ENCODE measurements at regions of chr6 and their contacts with region 1.

Region 1: DNA sequence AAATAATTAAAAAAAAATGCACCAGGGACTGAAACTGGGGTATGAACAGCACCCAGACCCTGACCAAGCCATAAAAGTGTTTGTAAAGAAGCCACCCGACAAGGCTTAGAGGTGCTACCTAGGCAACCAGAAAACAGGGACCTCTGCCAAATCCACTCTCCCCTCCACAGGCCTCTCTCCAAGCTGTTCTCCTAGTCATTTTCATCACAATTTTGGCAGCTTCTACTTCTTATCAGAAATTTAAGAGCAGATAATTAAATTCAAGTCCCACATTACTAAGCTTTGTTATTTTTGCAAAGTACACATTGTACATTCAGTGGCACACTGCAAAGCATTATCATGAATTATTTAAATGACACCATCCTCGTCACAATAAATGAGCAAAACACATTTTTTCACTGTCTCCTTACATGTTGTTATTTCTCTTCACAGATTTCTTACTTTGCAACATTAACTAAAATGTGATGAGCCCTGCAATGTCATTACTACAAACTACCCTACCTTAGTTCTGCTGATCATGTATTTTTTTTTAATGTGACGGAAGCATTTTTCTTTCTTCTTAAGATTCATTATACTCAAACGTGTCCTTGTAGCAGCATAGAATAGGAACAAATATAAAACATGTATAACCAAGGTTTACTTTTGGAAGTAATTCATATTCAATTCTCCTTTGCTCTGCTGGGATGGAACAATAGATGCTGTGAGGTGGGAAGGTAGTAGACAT is 38.1 kb downstream of the ECT2L start:
- DNase-seq: peak; percentile 59 to 82 (median 73)
- ATAC-seq: peak; percentile 94 to 97
- H3K4me3 ChIP-seq: no peak overlapping the region
- H3K27ac ChIP-seq: no peak overlapping the region
- H3K4me1 ChIP-seq: peaks cover 3% of the 10 kb centered on the region
- H3K27me3 ChIP-seq: no peaks in the 10 kb centered on the region

Region 2: DNA sequence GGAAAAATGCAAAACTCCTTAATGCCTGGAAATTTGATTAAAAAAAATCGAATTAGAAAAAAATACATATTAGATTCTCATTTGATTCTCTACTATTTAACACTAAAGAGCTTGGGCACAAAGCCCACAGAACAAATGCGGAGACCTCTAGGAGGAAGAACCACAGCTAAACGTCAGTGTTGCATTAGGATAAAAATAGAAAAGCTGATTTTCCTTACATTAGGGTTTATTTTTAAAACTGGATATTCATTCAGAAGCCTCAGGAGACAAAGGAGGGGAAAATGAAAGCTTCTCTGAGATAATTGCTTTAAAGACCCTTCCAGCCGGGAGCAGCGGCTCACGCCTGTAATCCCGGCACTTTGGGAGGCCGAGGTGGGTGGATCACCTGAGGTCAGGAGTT is 39.2 kb after region 1 on chr6:
- intact Hi-C with region 1: loop called in 1 of 4 experiments (anchors 5 kb)
- DNase-seq: no peak
- ATAC-seq: no peak
- H3K4me3 ChIP-seq: no peak overlapping the region
- H3K27ac ChIP-seq: no peak overlapping the region
- H3K4me1 ChIP-seq: peaks cover 3% of the 10 kb centered on the region
- H3K27me3 ChIP-seq: no peaks in the 10 kb centered on the region

Measured in right cardiac atrium (tissue), 5 donors.